SK-N-SH (cell line): ENCODE measurements at regions of chr5 and their contacts with region 1.

Region 1: GRCh38 chr5:134140530-134141201 is 26.2 kb downstream of the TCF7 start:
- DNase-seq: peak; percentile 80
- H3K4me3 ChIP-seq: no peak overlapping the region
- H3K27ac ChIP-seq: peak overlapping the region in 1 of 2 experiments; percentile 71; a peak in 2 of 4 replicates
- H3K4me1 ChIP-seq: peaks cover 11 to 21% of the 10 kb centered on the region in 2 experiments; a peak in 3 of 4 replicates
- H3K27me3 ChIP-seq: no peaks in the 10 kb centered on the region
- CTCF ChIP-seq: peak; percentile 79
- EP300 ChIP-seq: no peak
- RAD21 ChIP-seq: peak; percentile 75

Region 2: DNA sequence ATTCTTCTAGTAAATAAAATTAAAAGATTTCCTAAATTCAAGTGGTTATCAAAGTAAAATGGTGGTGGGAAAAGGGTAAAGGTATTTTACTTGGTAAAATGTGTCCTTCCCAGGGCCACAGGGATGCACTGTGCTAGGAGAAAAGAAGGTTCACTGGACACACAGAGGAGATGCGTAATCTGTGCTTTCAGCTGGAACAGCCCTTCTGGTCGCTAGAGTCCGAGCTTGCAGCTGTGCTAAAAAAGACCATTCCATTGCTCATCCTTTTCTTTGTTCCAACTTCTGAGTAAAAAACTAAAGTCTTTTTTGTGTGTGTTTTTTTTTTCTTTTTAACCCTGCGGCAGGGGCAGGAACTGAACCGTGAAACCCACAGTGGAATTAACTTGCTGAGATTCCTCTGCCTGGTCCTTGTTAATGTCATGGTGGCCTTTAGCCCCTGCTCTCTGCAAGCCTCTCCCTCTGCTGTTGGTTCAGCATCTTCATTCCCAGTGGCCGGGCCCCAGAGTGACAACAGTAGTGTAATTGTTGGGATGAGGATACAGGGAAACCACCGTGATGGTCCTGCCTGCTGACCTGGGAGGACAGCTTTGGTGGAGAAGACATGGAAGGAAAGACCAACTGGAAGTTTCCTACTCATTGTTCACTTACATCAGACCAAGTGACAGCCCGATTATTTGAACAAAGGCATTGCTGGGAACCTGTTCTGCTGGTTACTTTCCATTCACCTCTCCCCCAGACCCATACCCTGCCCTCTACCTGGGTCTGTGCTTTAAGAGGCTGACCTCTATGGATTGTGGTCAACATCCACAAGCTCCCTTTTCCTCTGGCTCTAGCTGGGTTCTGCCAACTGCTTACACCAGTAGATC is 496.4 kb before region 1 on chr5:
- CTCF ChIA-PET with region 1: no interaction called
- POLR2A ChIA-PET with region 1: no interaction called
- DNase-seq: no peak
- H3K4me3 ChIP-seq: no peak overlapping the region
- H3K27ac ChIP-seq: no peak overlapping the region
- H3K4me1 ChIP-seq: no peaks in the 10 kb centered on the region
- H3K27me3 ChIP-seq: no peaks in the 10 kb centered on the region
- CTCF ChIP-seq: no peak
- EP300 ChIP-seq: no peak
- RAD21 ChIP-seq: no peak

Region 3: GRCh38 chr5:134026521-134027268 is 114.0 kb before region 1 on chr5:
- CTCF ChIA-PET with region 1: interaction called, 19 read pairs
- POLR2A ChIA-PET with region 1: no interaction called
- DNase-seq: peak; percentile 80
- H3K4me3 ChIP-seq: no peak overlapping the region
- H3K27ac ChIP-seq: no peak overlapping the region
- H3K4me1 ChIP-seq: no peaks in the 10 kb centered on the region
- H3K27me3 ChIP-seq: no peaks in the 10 kb centered on the region
- CTCF ChIP-seq: peak; percentile 58
- EP300 ChIP-seq: no peak
- RAD21 ChIP-seq: peak; percentile 64

Region 4: GRCh38 chr5:134053840-134054338 is 86.8 kb before region 1 on chr5:
- CTCF ChIA-PET with region 1: interaction called, 673 read pairs
- POLR2A ChIA-PET with region 1: no interaction called
- DNase-seq: no peak
- H3K4me3 ChIP-seq: no peak overlapping the region
- H3K27ac ChIP-seq: peak overlapping the region in 1 of 2 experiments; percentile 50; a peak in 2 of 4 replicates
- H3K4me1 ChIP-seq: peaks cover 4 to 23% of the 10 kb centered on the region in 2 experiments; a peak in 3 of 4 replicates
- H3K27me3 ChIP-seq: no peaks in the 10 kb centered on the region
- CTCF ChIP-seq: no peak
- EP300 ChIP-seq: no peak
- RAD21 ChIP-seq: no peak

Region 5: GRCh38 chr5:134086943-134087305 is 53.7 kb before region 1 on chr5:
- CTCF ChIA-PET with region 1: interaction called, 14 read pairs
- POLR2A ChIA-PET with region 1: no interaction called
- DNase-seq: no peak
- H3K4me3 ChIP-seq: no peak overlapping the region
- H3K27ac ChIP-seq: no peak overlapping the region
- H3K4me1 ChIP-seq: peaks cover 0 to 32% of the 10 kb centered on the region in 2 experiments; a peak in 1 of 4 replicates
- H3K27me3 ChIP-seq: no peaks in the 10 kb centered on the region
- CTCF ChIP-seq: no peak
- EP300 ChIP-seq: no peak
- RAD21 ChIP-seq: no peak

Region 6: DNA sequence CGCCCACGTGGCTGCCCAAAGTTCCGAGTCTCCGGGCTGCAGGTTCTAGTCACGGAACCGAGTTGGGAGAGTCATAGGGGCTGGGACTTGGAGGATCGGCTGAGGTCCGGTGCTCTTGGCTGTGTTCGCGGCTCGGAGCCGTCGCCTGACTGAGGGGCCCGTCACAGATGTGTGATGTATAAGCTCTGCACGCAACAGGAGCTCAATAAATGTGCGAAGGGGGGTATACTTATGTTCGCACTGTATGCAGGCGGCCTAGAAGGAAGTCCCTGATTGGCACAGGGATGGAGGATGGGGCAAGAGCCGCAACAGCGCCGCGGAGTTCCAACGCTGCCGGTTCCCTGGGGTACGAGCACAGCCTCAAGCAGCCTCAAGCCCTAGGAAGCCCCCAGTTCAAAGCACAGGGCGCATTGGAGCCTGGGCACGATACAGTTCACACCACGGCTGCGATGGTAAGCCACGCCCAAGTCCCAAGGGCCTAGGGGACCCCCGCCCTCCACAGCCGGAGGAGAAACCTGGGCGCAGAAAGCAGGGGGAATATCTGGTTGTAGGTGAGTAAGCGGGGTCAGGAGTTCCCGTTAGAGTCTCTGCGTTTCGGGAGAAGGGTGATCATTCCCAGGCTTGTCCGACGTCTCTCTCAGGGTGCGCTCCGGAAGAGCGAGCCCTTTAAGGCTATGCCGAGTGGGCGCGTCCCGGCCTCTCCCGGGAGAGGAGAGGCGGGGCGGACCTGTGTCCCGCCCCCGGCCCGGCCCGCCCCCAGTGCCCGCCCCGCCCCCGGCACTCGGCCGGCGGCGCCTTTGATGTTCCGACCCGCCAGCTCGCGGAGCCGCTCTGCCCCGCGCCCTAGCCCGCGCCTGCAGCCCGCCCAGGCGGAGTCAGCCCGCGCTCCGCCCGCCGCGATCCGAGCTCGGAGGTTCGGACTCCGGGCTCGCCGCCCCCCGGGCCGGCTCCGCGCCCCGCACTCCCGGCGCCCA is 26.5 kb before region 1 on chr5 and contains the start of gene TCF7:
- CTCF ChIA-PET with region 1: interaction called, 18 read pairs
- POLR2A ChIA-PET with region 1: no interaction called
- DNase-seq: peak; percentile 99
- H3K4me3 ChIP-seq: peak within 1 kb of the TSS; percentile 57 to 70
- H3K27ac ChIP-seq: peak within 1 kb of the TSS in 1 of 2 experiments; percentile 91; a peak in 2 of 4 replicates
- H3K4me1 ChIP-seq: peaks cover 0 to 68% of the 10 kb centered on the region in 2 experiments; a peak in 2 of 4 replicates
- H3K27me3 ChIP-seq: no peaks in the 10 kb centered on the region
- CTCF ChIP-seq: no peak
- EP300 ChIP-seq: no peak
- RAD21 ChIP-seq: no peak
- polyA plus RNA-seq, gene TCF7: 2.3 and 2.7 TPM in 2 replicates

Region 7: GRCh38 chr5:134161513-134162395 is 21.1 kb after region 1 on chr5:
- CTCF ChIA-PET with region 1: interaction called, 17 read pairs
- POLR2A ChIA-PET with region 1: no interaction called
- DNase-seq: no peak
- H3K4me3 ChIP-seq: no peak overlapping the region
- H3K27ac ChIP-seq: no peak overlapping the region
- H3K4me1 ChIP-seq: no peaks in the 10 kb centered on the region
- H3K27me3 ChIP-seq: no peaks in the 10 kb centered on the region
- CTCF ChIP-seq: no peak
- EP300 ChIP-seq: no peak
- RAD21 ChIP-seq: no peak

Region 8: DNA sequence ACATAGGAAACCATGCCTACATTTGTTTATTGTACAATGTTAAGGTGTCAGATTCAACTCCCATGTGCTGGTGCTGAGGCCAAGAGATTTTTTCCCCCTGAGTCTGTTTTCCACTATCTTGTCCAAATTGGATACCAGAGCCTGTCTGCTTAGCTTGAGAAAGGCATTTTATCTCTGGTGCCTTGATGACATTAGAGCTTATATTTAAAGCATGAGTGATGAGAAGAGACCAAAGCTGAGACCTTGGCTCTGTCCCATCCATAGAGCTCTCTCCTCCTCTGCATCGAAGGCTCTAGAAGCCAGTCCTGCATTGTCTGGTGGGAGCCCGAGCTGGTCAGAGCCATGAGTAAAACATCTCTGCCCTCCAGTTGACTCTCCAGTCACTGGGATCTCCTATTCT is 95.7 kb after region 1 on chr5:
- CTCF ChIA-PET with region 1: no interaction called
- POLR2A ChIA-PET with region 1: no interaction called
- DNase-seq: no peak
- H3K4me3 ChIP-seq: no peak overlapping the region
- H3K27ac ChIP-seq: no peak overlapping the region
- H3K4me1 ChIP-seq: peaks cover 0 to 8% of the 10 kb centered on the region in 2 experiments; a peak in 1 of 4 replicates
- H3K27me3 ChIP-seq: no peaks in the 10 kb centered on the region
- CTCF ChIP-seq: no peak
- EP300 ChIP-seq: no peak
- RAD21 ChIP-seq: no peak